ENCODE measurements at regions of chr20 and their contacts with region 1.

Region 1: GRCh38 chr20:63641792-63642544 is 11.3 kb downstream of the STMN3 start:
- DNase-seq: peak; percentile 96
- ATAC-seq: peak; percentile 72
- H3K4me3 ChIP-seq: peak overlapping the region in 4 of 5 experiments; percentile 84 to 97 (median 90)
- H3K4me3 Mint-ChIP-seq: peak overlapping the region; percentile 82
- H3K27ac ChIP-seq: peak overlapping the region; percentile 91
- H3K27ac Mint-ChIP-seq: peak overlapping the region; percentile 97
- H3K4me1 ChIP-seq: peaks cover 23 to 41% of the 10 kb centered on the region in 2 donors
- H3K4me1 Mint-ChIP-seq: peaks cover 28% of the 10 kb centered on the region
- H3K27me3 ChIP-seq: no peaks in the 10 kb centered on the region
- H3K27me3 Mint-ChIP-seq: peaks cover 4% of the 10 kb centered on the region
- CTCF ChIP-seq: peak; percentile 67

Region 2: GRCh38 chr20:63394069-63394919 is 247.7 kb before region 1 on chr20:
- CTCF ChIA-PET with region 1: no interaction called
- POLR2A ChIA-PET with region 1: no interaction called
- intact Hi-C with region 1: no loop called
- DNase-seq: no peak
- ATAC-seq: no peak
- H3K4me3 ChIP-seq: no peak overlapping the region
- H3K4me3 Mint-ChIP-seq: no peak overlapping the region
- H3K27ac ChIP-seq: no peak overlapping the region
- H3K27ac Mint-ChIP-seq: no peak overlapping the region
- H3K4me1 ChIP-seq: no peaks in the 10 kb centered on the region
- H3K4me1 Mint-ChIP-seq: no peaks in the 10 kb centered on the region
- H3K27me3 ChIP-seq: peaks cover 0 to 6% (median 0%) of the 10 kb centered on the region in 4 experiments
- H3K27me3 Mint-ChIP-seq: no peaks in the 10 kb centered on the region
- CTCF ChIP-seq: no peak

Region 3: DNA sequence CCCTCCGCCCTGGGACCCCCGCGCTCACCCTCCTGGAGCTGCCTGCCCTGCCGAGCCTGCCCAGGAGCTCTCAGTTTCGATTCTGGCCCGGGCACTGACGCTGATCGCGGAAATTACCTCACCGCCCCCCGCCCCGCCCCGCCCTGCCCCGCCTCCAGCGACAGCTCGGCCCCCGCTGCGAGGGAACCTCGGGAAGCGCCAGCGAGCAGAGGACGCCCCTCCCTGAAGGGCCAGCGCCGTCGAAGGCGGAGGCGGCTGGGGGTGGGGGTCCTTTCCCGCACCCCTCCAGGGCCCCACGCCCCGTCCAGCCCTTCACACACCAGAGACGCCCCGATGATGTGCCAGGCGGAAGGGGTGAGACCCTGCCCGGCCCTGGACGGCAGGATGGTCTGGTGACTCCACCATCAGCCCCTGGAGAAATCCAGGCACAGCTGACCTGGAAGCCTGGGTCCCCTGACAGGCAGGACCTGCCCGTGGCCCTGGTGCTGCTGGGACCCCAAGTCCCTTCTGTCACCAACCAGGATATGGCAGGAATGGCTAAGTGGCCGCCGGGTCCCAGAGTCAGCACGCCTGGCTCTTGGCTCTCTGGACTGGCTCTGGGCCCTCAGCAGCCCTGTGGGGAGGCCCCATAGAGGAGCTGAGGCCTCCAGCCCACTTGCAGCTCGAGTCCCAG is 67.7 kb before region 1 on chr20 and contains the start of gene HELZ2:
- CTCF ChIA-PET with region 1: no interaction called
- POLR2A ChIA-PET with region 1: interaction called, 11 read pairs
- intact Hi-C with region 1: no loop called
- DNase-seq: peak; percentile 82
- ATAC-seq: peak; percentile 93
- H3K4me3 ChIP-seq: peak within 1 kb of the TSS; percentile 61 to 86 (median 79)
- H3K4me3 Mint-ChIP-seq: peak within 1 kb of the TSS; percentile 87
- H3K27ac ChIP-seq: peak within 1 kb of the TSS; percentile 71 to 86
- H3K27ac Mint-ChIP-seq: peak within 1 kb of the TSS; percentile 83
- H3K4me1 ChIP-seq: peaks cover 21 to 38% of the 10 kb centered on the region in 2 donors
- H3K4me1 Mint-ChIP-seq: peaks cover 9% of the 10 kb centered on the region
- H3K27me3 ChIP-seq: no peaks in the 10 kb centered on the region
- H3K27me3 Mint-ChIP-seq: no peaks in the 10 kb centered on the region
- CTCF ChIP-seq: no peak
- total RNA-seq, gene HELZ2: 52.6 and 53.7 TPM in 2 replicates

Region 4: GRCh38 chr20:63580796-63581461 is 61.0 kb before region 1 on chr20:
- CTCF ChIA-PET with region 1: interaction called, 18 read pairs
- POLR2A ChIA-PET with region 1: interaction called, 5 read pairs
- intact Hi-C with region 1: loop called (anchors 5 kb)
- DNase-seq: peak; percentile 81
- ATAC-seq: peak; percentile 93
- H3K4me3 ChIP-seq: no peak overlapping the region
- H3K4me3 Mint-ChIP-seq: no peak overlapping the region
- H3K27ac ChIP-seq: no peak overlapping the region
- H3K27ac Mint-ChIP-seq: peak overlapping the region; percentile 26
- H3K4me1 ChIP-seq: peaks cover 0 to 6% of the 10 kb centered on the region in 2 donors
- H3K4me1 Mint-ChIP-seq: peaks cover 4% of the 10 kb centered on the region
- H3K27me3 ChIP-seq: no peaks in the 10 kb centered on the region
- H3K27me3 Mint-ChIP-seq: no peaks in the 10 kb centered on the region
- CTCF ChIP-seq: peak; percentile 71

Measured in B cell (primary cell).